ENCODE measurements at regions of chr14 and their contacts with region 1.

Region 1: DNA sequence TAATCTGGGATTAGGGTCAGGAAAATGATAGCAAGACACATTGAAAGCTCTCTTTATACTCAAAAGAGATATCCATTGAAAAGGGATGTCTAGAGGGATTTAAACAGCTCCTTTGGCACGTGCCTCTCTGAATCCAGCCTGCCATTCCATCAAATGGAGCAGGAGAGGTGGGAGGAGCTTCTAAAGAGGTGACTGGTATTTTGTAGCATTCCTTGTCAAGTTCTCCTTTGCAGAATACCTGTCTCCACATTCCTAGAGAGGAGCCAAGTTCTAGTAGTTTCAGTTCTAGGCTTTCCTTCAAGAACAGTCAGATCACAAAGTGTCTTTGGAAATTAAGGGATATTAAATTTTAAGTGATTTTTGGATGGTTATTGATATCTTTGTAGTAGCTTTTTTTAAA is 25.4 kb upstream of the PLEKHD1 start:
- DNase-seq: no peak
- H3K4me3 ChIP-seq: no peak overlapping the region
- H3K27ac ChIP-seq: no peak overlapping the region
- H3K4me1 ChIP-seq: no peaks in the 10 kb centered on the region
- H3K27me3 ChIP-seq: no peaks in the 10 kb centered on the region
- CTCF ChIP-seq: no peak
- POLR2A ChIP-seq: no peak

Region 2: GRCh38 chr14:69183735-69184134 is 275.4 kb before region 1 on chr14:
- intact Hi-C with region 1: no loop called
- DNase-seq: no peak
- H3K4me3 ChIP-seq: no peak overlapping the region
- H3K27ac ChIP-seq: no peak overlapping the region
- H3K4me1 ChIP-seq: no peaks in the 10 kb centered on the region
- H3K27me3 ChIP-seq: no peaks in the 10 kb centered on the region
- CTCF ChIP-seq: no peak
- POLR2A ChIP-seq: no peak

Region 3: DNA sequence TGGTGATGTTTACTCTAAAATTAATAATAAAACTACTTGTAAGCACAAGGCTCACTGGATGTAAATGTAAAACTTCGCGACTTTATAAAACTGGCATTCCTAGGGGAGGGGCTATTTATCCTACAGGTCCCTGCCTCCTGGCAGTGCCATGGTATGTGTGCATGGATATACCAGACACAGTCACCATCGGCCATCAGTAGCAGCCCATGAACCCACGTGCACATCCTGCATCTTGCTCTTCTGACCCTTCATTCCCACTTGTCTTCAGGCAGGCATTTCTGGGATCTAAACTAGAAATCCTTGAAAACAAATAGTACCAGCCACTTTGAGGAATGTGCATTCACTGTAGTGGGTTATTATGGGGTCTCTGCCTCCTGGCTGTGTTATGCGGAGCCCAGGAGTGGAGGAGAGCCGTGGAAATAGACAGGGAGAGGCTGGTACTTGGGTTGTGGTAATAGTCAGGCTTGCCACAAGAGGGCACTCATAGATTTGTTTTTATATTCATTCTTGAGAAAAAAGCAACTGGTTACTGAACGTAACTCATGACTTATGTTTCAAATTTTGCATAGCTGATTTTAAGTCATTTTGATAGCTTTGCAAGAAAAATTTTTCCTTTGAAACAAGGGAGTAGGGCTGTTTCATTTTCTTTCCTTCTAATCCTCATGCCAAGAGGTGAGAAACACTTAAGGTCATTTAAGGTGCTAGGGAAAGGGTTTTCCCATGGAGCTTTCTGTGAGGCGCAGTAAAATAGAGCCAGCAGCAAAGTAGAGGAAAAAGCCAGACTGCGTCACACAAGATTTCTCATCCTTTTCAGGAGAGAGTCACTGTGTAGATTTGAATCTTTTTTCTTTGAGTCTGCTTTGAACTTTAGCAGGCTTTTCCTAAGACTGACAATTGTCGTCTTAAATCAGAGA is 216.6 kb before region 1 on chr14:
- intact Hi-C with region 1: loop called (anchors 5 kb)
- DNase-seq: peak; percentile 67 to 83
- H3K4me3 ChIP-seq: no peak overlapping the region
- H3K27ac ChIP-seq: peak overlapping the region; percentile 57 to 73
- H3K4me1 ChIP-seq: no peaks in the 10 kb centered on the region
- H3K27me3 ChIP-seq: no peaks in the 10 kb centered on the region
- CTCF ChIP-seq: peak; percentile 74 to 81 (median 77)
- POLR2A ChIP-seq: no peak

Measured in uterus (tissue), 4 donors.